Activated CD4-positive, alpha-beta T cell treated with anti-CD3 and anti-CD28 coated beads, Interleukin-2, amount 10 ng/mL, durations not matched to agents 24 days and 14 days (primary cell): ENCODE measurements at regions of chr6 and their contacts with region 1.

Region 1: DNA sequence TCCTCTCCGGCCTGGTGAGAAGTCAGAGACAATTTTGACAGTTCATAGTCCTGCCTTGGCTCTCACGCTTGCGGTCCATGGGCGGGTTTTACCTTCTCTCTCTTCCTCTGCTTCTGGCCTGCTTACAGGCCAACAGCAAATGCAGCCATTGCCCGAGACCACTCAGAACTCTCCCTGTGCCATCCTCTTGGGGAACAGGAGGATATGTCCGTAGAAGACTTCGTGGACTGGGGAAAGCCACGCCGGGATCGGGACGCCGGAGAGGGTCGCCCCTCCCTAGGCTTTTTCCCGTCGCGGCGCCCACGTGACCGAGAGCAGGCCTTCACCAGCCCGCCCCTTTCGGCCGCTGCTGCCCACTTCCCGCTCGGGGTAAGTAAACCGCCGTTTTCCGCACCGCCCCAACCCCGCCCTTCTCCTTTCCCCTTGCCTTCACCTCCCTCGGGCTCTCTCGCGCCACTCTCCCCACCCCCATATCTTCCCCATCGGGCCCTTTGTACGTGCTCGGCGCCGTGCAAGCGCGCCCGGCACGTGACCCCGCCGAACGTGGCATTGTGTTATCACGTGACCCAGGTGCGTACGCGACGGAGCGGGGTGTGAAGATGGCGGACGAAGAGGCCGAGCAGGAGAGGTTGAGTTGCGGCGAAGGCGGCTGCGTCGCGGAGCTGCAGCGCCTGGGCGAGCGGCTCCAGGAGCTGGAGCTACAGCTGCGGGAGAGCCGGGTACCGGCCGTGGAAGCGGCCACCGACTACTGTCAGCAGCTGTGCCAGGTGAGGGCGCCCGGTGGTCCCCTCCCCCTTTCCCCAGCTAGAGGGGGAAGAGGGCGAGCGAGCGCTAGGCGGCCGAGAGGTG is at the start of gene ZNF292:
- DNase-seq: peak; percentile 99
- H3K4me3 Mint-ChIP-seq: peak within 1 kb of the TSS; percentile 88
- H3K27ac Mint-ChIP-seq: peak within 1 kb of the TSS; percentile 95
- H3K4me1 Mint-ChIP-seq: peaks cover 48% of the 10 kb centered on the region
- H3K27me3 Mint-ChIP-seq: peaks cover 2% of the 10 kb centered on the region
- total RNA-seq, gene ZNF292: 61.2 and 63.7 TPM in 2 replicates

Region 2: GRCh38 chr6:87182321-87182720 is 27.1 kb after region 1 on chr6:
- intact Hi-C with region 1: loop called (anchors 1 kb)
- DNase-seq: no peak
- H3K4me3 Mint-ChIP-seq: peak overlapping the region; percentile 43
- H3K27ac Mint-ChIP-seq: peak overlapping the region; percentile 89
- H3K4me1 Mint-ChIP-seq: peaks cover 48% of the 10 kb centered on the region
- H3K27me3 Mint-ChIP-seq: no peaks in the 10 kb centered on the region

Region 3: DNA sequence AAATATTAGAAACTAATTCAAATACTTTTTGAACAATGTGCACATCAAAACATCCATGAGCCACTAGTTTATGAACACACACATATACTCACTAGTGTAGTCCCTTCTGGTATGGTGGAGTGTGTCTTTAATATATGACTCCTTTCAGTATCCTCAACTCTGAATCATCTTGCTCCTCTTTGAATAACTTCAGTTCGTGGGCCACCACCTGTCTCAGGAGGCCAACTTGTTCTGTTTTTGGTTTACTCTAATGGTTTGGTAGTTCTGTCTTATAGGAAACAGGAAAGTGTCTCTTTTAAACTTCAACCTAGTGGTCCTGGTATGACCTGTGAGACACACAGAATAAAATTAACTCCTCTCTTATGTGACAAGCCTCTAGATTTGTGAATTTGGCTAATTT is 55.8 kb after region 1 on chr6:
- intact Hi-C with region 1: loop called (anchors 1 kb)
- DNase-seq: no peak
- H3K4me3 Mint-ChIP-seq: no peak overlapping the region
- H3K27ac Mint-ChIP-seq: no peak overlapping the region
- H3K4me1 Mint-ChIP-seq: peaks cover 48% of the 10 kb centered on the region
- H3K27me3 Mint-ChIP-seq: no peaks in the 10 kb centered on the region

Region 4: DNA sequence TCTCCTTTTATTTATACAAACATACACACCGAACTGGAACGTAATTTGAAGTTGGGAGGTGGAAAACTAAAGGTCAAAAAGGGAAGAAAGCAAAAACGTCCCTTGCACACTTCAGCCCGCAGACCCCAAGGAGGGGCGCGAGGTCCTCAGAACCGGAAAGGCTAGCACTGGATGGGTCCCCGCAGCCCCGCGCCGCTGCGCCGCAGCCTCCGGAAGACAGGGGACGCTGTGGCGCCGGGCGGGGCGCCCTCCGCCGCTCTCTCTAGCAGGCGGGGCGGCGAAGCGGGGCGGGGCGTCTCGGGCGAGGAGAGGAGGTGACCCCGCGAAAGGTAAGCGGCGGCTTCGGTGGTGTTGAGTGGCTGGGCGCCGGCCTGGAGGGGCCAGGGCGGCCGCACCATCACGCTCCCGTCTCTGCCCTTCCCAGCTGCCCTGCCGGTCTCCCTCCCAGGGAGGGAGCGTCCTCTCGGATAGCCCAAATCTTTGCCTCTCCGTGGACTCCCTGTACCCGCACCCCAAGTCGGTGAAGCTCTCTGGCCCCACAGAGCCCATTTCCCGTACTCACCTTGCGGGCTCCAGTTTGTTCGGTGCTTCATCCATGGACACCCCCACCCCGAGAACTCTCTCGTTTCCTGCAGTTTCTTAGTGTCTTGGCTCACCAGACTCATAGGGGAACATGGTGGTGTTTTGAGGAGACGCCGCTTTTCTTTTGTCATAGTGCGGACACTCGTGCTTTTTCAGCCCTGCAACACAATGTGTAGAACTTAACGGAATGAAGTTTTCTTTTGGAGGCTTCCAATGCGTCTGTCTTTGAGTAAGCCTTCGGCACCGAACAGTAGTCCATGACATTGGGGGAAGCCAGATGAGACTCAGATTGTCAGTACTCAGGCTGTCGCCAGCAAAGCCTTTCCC is 167.3 kb after region 1 on chr6 and contains the start of gene SMIM8:
- intact Hi-C with region 1: loop called (anchors 1 kb)
- DNase-seq: peak; percentile 97
- H3K4me3 Mint-ChIP-seq: peak within 1 kb of the TSS; percentile 99
- H3K27ac Mint-ChIP-seq: peak within 1 kb of the TSS; percentile 91
- H3K4me1 Mint-ChIP-seq: peaks cover 11% of the 10 kb centered on the region
- H3K27me3 Mint-ChIP-seq: peaks cover 8% of the 10 kb centered on the region
- total RNA-seq, gene SMIM8: 8.1 and 10.5 TPM in 2 replicates

Region 5: DNA sequence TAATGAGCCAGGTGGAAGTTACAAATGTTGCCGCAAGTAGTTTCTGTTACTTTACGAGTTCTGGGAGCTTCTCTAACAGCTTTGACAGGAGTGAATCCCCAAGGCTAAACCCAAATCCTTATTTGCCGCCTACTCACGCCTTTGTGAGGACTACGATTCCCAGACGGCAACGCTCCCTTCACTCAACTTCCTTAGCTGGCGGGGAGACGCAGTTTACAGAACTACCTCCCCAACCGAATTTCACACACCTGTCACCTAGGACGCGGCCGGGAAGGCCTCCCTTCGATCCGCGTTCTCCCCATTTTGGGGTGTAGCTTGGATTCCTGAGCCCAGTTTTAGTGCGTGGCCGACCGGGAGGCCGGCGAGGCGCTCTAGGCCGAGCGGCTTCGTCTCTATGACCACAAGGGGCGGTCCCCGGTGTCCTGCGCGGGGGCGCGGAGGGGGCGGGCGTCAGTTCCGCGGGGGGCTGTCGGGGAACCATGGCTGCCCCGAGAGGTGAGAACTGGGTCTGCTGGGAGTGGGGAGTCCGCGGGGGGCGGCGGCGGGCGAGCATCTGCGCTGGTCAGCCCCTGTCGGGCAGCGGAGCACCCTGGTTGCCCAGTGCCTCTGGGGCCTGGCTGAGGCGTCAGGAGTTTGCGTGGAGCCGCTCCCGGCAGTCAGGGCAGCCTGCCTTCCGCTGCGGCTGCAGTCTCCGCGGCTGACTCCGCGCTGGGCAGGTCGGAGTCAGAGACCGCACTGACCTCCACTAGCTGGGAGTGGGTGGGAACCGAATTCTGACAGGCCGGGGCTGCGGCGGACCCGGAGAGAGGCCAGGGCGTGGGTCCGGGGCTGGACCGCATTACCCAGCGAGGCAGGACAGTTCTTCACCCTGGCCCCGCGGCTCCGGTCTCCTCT is 317.6 kb after region 1 on chr6 and contains the start of gene SLC35A1:
- intact Hi-C with region 1: loop called (anchors 1 kb)
- DNase-seq: peak; percentile 96
- H3K4me3 Mint-ChIP-seq: peak within 1 kb of the TSS; percentile 95
- H3K27ac Mint-ChIP-seq: peak within 1 kb of the TSS; percentile 97
- H3K4me1 Mint-ChIP-seq: peaks cover 17% of the 10 kb centered on the region
- H3K27me3 Mint-ChIP-seq: peaks cover 8% of the 10 kb centered on the region
- total RNA-seq, gene SLC35A1: 8.8 and 9.1 TPM in 2 replicates

Region 6: DNA sequence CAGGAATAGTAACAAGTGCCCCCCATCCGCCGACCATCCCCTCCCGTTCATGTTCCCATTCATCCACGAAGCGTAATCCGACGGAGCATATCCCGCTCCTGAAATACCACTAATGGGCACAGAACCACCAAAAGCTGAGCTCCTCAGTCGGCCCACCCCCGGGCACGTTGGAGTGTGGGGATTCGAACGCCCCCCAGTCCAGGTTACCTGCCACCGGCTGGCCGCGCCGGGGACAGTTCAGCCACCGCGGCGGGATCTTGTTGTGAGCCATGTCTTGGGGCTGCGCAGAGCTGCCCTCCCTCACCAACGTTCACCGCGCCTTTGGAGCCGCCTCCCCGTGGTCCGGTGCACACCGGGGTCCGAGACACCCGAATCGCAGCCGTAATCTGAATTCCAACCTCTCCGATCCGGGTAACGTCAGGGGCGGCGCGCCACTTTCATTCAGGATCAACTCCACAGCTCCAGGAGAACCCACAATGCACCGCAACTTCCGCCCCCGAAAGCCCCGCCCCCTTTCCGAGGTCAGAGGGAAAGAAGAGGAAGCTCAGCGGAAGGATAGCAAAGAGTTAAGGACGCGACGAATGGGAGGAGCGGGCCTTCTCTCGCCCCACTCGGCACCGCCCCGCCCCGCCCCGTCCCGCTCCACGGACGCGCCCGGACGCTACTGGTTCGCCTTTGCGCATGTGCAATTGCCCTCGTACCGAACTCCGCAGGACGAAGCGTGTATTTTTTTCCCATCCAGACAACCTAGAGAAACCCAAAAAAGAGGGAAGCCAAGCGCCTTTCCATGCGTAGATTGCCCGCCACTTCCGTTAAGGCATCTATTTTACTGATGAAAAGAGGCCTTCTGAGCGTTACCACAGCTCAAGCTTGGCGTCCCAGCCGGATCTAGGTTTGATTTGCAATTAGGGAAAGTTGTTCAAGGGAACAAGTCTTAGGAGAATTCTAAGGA is 1808.2 kb after region 1 on chr6 and contains the start of gene RNGTT:
- intact Hi-C with region 1: loop called (anchors 5 kb)
- DNase-seq: peak; percentile 99
- H3K4me3 Mint-ChIP-seq: peak within 1 kb of the TSS; percentile 98
- H3K27ac Mint-ChIP-seq: peak within 1 kb of the TSS; percentile 94
- H3K4me1 Mint-ChIP-seq: peaks cover 25% of the 10 kb centered on the region
- H3K27me3 Mint-ChIP-seq: peaks cover 4% of the 10 kb centered on the region
- total RNA-seq, gene RNGTT: 23.8 and 25.9 TPM in 2 replicates